B cell (primary cell): ENCODE measurements at regions of chr2 and their contacts with region 1.

Region 1: GRCh38 chr2:101883863-101884262 is 107.9 kb upstream of the IL1R2 start:
- DNase-seq: peak; percentile 55
- ATAC-seq: no peak
- H3K4me3 ChIP-seq: no peak overlapping the region
- H3K4me3 Mint-ChIP-seq: no peak overlapping the region
- H3K27ac ChIP-seq: no peak overlapping the region
- H3K27ac Mint-ChIP-seq: peak overlapping the region; percentile 20
- H3K4me1 ChIP-seq: no peaks in the 10 kb centered on the region
- H3K4me1 Mint-ChIP-seq: peaks cover 2% of the 10 kb centered on the region
- H3K27me3 ChIP-seq: no peaks in the 10 kb centered on the region
- H3K27me3 Mint-ChIP-seq: no peaks in the 10 kb centered on the region
- CTCF ChIP-seq: peak; percentile 78

Region 2: DNA sequence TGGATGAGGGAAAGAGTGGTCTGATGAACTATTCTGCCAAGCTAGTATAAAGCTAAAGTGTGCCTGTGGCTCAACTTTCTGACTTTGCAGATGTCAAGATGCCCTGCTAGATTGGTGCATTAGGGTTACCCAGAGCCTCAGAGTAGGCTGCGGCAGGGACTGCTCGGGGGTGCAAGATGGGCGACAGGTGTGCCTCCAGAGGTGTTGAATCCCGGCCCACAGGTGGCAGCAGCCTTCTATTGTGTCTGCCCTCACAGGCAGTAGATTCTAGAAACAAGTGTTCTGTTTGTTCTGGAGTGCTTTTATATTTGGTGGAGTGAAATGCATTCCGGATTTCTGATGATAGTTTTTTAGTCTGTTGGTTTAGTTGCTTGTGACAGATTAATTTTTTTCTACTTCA is 23.7 kb before region 1 on chr2:
- CTCF ChIA-PET with region 1: interaction called, 13 read pairs
- POLR2A ChIA-PET with region 1: no interaction called
- intact Hi-C with region 1: no loop called
- DNase-seq: no peak
- ATAC-seq: no peak
- H3K4me3 ChIP-seq: no peak overlapping the region
- H3K4me3 Mint-ChIP-seq: no peak overlapping the region
- H3K27ac ChIP-seq: no peak overlapping the region
- H3K27ac Mint-ChIP-seq: peak overlapping the region; percentile 38
- H3K4me1 ChIP-seq: no peaks in the 10 kb centered on the region
- H3K4me1 Mint-ChIP-seq: no peaks in the 10 kb centered on the region
- H3K27me3 ChIP-seq: no peaks in the 10 kb centered on the region
- H3K27me3 Mint-ChIP-seq: no peaks in the 10 kb centered on the region
- CTCF ChIP-seq: no peak

Region 3: DNA sequence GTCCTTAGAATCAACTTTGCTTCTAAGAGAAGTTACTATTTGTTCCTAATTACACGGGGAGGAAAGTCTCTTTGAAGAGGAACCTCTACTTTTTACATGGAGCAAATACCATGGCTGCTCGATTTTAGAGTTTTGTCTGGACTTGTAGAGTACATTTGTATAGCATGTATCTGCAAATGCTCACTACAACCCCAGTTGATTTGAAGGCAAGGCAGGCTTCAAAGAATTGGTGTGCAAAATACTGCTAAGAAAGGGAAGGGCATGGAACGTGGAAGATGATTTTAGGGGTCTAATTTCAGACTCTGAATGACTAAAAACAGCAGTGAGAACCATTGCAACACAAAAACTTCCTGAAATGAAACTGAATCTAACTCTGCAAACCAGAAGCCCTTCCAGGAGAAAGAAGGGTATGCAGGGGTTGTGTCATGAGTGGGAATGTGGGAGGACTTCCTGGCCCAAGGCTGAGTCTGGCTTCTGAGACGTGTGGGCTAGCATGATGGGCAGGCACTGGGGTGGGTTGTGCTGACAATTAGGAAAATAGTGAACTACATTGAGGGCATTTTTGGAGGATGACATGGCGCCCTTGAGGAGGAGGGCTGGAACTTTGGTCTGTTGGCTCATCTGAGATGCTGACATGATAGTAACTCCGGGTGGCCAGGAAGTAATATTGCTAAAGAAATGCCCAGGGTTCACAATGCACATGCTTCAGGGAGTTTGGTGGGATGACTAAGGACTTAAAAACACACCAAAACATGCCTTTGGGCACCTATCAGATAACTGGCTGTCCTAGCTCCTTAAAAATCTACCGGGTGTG is 89.0 kb after region 1 on chr2:
- CTCF ChIA-PET with region 1: no interaction called
- POLR2A ChIA-PET with region 1: no interaction called
- intact Hi-C with region 1: no loop called
- DNase-seq: no peak
- ATAC-seq: no peak
- H3K4me3 ChIP-seq: no peak overlapping the region
- H3K4me3 Mint-ChIP-seq: no peak overlapping the region
- H3K27ac ChIP-seq: no peak overlapping the region
- H3K27ac Mint-ChIP-seq: no peak overlapping the region
- H3K4me1 ChIP-seq: no peaks in the 10 kb centered on the region
- H3K4me1 Mint-ChIP-seq: no peaks in the 10 kb centered on the region
- H3K27me3 ChIP-seq: no peaks in the 10 kb centered on the region
- H3K27me3 Mint-ChIP-seq: peaks cover 14% of the 10 kb centered on the region
- CTCF ChIP-seq: no peak

Region 4: DNA sequence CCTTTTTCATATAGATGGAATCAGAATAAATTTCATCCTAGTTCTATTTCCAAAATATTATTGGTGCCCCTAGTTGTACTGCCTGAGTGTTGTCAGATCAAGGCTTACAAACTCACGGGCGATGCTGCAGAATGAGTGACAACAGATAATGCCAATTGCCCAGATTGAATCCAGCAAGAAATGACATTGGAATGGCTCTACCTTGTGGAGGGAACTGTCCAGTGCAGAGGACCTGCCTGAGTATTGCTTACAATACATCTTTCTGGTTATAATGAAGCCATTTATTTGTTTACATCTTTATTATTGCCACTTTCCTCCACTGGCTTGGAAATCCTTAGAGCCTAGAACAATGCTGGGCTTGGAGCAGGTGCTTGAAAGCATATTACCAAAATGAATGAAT is 100.1 kb after region 1 on chr2:
- CTCF ChIA-PET with region 1: interaction called, 3 read pairs
- POLR2A ChIA-PET with region 1: no interaction called
- intact Hi-C with region 1: loop called (anchors 10 kb)
- DNase-seq: no peak
- ATAC-seq: no peak
- H3K4me3 ChIP-seq: no peak overlapping the region
- H3K4me3 Mint-ChIP-seq: no peak overlapping the region
- H3K27ac ChIP-seq: no peak overlapping the region
- H3K27ac Mint-ChIP-seq: no peak overlapping the region
- H3K4me1 ChIP-seq: no peaks in the 10 kb centered on the region
- H3K4me1 Mint-ChIP-seq: peaks cover 4% of the 10 kb centered on the region
- H3K27me3 ChIP-seq: peaks cover 0 to 5% (median under 1%) of the 10 kb centered on the region in 4 experiments
- H3K27me3 Mint-ChIP-seq: peaks cover 13% of the 10 kb centered on the region
- CTCF ChIP-seq: no peak

Region 5: DNA sequence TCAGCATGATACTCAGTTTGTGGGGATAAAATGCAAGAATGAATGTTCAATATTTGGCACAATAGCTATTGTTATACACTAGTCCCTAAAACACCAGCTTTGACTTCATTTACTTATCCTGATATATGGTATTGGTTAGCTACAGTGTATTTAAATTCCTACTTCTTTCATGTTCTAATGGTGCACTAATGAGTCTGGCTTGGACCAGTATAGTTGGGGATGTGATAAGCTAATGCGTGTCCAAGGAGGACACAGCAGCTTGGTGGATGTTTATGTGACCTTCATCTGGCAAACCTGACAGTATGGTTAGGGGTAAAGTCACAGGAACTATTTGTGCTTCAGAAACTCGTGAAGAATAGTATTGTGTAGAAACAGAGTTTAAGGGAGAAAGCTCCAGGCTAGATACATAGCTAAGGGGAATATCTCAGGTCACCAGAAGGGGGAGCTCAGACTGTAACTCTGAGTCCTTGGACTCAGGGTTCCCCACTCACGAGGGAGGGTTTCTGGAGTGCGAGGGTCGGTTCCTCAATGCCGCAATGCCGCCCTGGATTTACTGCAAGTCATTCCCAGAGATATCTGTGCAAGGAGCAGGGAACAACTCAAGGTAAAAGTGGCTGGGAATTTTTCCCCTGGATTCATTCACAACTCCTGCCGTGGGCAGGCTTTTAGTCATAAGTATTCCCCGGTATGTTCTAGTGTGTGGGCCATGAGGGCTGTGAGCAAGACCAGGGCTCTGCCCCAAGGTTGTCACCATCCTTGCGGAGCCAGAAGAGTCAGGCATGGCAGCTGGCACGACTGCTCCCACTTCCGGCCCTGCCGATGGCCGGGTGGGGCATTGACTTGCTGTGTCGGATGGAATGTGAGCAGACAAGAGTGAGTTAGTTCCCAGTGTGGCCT is 122.4 kb after region 1 on chr2:
- CTCF ChIA-PET with region 1: interaction called, 11 read pairs
- POLR2A ChIA-PET with region 1: no interaction called
- intact Hi-C with region 1: no loop called
- DNase-seq: peak; percentile 40
- ATAC-seq: no peak
- H3K4me3 ChIP-seq: no peak overlapping the region
- H3K4me3 Mint-ChIP-seq: no peak overlapping the region
- H3K27ac ChIP-seq: no peak overlapping the region
- H3K27ac Mint-ChIP-seq: no peak overlapping the region
- H3K4me1 ChIP-seq: peaks cover 0 to 9% of the 10 kb centered on the region in 2 donors
- H3K4me1 Mint-ChIP-seq: peaks cover 9% of the 10 kb centered on the region
- H3K27me3 ChIP-seq: peaks cover 0 to 6% (median 0%) of the 10 kb centered on the region in 4 experiments
- H3K27me3 Mint-ChIP-seq: peaks cover 5% of the 10 kb centered on the region
- CTCF ChIP-seq: peak; percentile 58

Region 6: GRCh38 chr2:102020596-102021181 is 136.8 kb after region 1 on chr2:
- CTCF ChIA-PET with region 1: interaction called, 13 read pairs
- POLR2A ChIA-PET with region 1: no interaction called
- intact Hi-C with region 1: no loop called
- DNase-seq: peak; percentile 80
- ATAC-seq: peak; percentile 97
- H3K4me3 ChIP-seq: no peak overlapping the region
- H3K4me3 Mint-ChIP-seq: no peak overlapping the region
- H3K27ac ChIP-seq: no peak overlapping the region
- H3K27ac Mint-ChIP-seq: no peak overlapping the region
- H3K4me1 ChIP-seq: peaks cover 0 to 3% of the 10 kb centered on the region in 2 donors
- H3K4me1 Mint-ChIP-seq: peaks cover 4% of the 10 kb centered on the region
- H3K27me3 ChIP-seq: peaks cover 0 to 8% (median 0%) of the 10 kb centered on the region in 4 experiments
- H3K27me3 Mint-ChIP-seq: peaks cover 5% of the 10 kb centered on the region
- CTCF ChIP-seq: peak; percentile 99

Region 7: GRCh38 chr2:102030855-102031527 is 147.1 kb after region 1 on chr2:
- CTCF ChIA-PET with region 1: no interaction called
- POLR2A ChIA-PET with region 1: no interaction called
- intact Hi-C with region 1: no loop called
- DNase-seq: no peak
- ATAC-seq: no peak
- H3K4me3 ChIP-seq: no peak overlapping the region
- H3K4me3 Mint-ChIP-seq: no peak overlapping the region
- H3K27ac ChIP-seq: no peak overlapping the region
- H3K27ac Mint-ChIP-seq: no peak overlapping the region
- H3K4me1 ChIP-seq: peaks cover 13 to 15% of the 10 kb centered on the region in 2 donors
- H3K4me1 Mint-ChIP-seq: peaks cover 24% of the 10 kb centered on the region
- H3K27me3 ChIP-seq: no peaks in the 10 kb centered on the region
- H3K27me3 Mint-ChIP-seq: peaks cover 6% of the 10 kb centered on the region
- CTCF ChIP-seq: no peak

Region 8: GRCh38 chr2:102449370-102449974 is 565.6 kb after region 1 on chr2:
- CTCF ChIA-PET with region 1: interaction called, 7 read pairs
- POLR2A ChIA-PET with region 1: no interaction called
- intact Hi-C with region 1: loop called (anchors 2 kb)
- DNase-seq: peak; percentile 60
- ATAC-seq: no peak
- H3K4me3 ChIP-seq: no peak overlapping the region
- H3K4me3 Mint-ChIP-seq: no peak overlapping the region
- H3K27ac ChIP-seq: no peak overlapping the region
- H3K27ac Mint-ChIP-seq: no peak overlapping the region
- H3K4me1 ChIP-seq: no peaks in the 10 kb centered on the region
- H3K4me1 Mint-ChIP-seq: no peaks in the 10 kb centered on the region
- H3K27me3 ChIP-seq: no peaks in the 10 kb centered on the region
- H3K27me3 Mint-ChIP-seq: peaks cover 4% of the 10 kb centered on the region
- CTCF ChIP-seq: peak; percentile 78